ENCODE measurements at regions of chrX and their contacts with region 1.

Region 1: DNA sequence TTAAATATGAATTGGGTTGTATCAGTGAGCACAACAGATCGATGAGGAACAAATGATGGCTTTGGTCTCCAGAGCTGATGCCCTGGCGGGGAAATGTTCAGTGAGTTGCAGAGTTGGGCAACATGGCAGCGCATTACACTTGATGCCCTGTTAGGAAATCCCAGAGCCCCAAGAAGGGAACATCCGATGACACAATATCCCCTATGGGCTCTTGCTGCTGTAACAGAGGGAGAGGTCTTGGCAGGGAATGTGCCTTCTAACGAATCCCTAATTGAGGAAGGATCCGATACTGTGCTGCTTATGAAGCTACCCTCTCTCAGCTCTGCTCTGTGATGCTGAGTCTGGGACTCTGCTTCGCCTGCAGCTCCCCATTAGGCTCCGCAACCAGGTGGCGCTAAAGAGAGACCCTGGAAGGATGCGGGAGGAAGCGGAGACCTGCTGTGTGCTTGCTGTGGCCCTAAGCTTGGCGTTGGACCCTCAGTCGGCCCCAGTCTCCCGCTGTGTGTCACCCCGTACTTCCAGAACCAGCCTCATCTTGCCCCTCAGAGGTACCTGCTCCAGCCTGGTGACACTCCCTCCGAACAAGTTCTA is 38.9 kb downstream of the PDHA1 start:
- DNase-seq: peak; percentile 77
- ATAC-seq: peak; percentile 94
- H3K4me3 Mint-ChIP-seq: no peak overlapping the region
- H3K27ac Mint-ChIP-seq: no peak overlapping the region
- H3K4me1 Mint-ChIP-seq: no peaks in the 10 kb centered on the region
- H3K27me3 Mint-ChIP-seq: no peaks in the 10 kb centered on the region
- CTCF ChIP-seq: peak; percentile 32; the same call in 1 of the 2 replicates

Region 2: DNA sequence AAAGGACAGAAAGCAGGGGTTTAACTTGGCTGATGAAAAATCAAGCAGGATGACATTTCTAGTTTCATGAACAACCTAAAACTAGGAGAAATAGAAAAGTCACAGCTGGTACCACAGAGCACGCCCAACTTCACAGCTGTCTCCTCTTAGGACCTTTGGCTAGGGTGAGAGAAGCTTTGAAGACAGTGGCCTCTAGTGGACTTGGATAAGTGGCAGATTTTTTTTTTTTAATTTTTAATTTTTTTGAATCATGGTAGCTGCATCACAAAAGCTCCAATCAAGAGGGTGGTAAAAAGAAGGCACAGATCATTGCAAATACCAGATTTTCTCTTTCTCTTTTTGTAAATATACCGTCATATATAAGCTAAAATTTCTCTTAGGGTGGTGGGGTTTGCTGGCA is 152.8 kb after region 1 on chrX:
- CTCF ChIA-PET with region 1: interaction called, 38 read pairs
- POLR2A ChIA-PET with region 1: no interaction called
- DNase-seq: no peak
- ATAC-seq: no peak
- H3K4me3 Mint-ChIP-seq: no peak overlapping the region
- H3K27ac Mint-ChIP-seq: no peak overlapping the region
- H3K4me1 Mint-ChIP-seq: no peaks in the 10 kb centered on the region
- H3K27me3 Mint-ChIP-seq: no peaks in the 10 kb centered on the region
- CTCF ChIP-seq: no peak